PC-9 (cell line): ENCODE measurements at regions of chr2 and their contacts with region 1.

Region 1: DNA sequence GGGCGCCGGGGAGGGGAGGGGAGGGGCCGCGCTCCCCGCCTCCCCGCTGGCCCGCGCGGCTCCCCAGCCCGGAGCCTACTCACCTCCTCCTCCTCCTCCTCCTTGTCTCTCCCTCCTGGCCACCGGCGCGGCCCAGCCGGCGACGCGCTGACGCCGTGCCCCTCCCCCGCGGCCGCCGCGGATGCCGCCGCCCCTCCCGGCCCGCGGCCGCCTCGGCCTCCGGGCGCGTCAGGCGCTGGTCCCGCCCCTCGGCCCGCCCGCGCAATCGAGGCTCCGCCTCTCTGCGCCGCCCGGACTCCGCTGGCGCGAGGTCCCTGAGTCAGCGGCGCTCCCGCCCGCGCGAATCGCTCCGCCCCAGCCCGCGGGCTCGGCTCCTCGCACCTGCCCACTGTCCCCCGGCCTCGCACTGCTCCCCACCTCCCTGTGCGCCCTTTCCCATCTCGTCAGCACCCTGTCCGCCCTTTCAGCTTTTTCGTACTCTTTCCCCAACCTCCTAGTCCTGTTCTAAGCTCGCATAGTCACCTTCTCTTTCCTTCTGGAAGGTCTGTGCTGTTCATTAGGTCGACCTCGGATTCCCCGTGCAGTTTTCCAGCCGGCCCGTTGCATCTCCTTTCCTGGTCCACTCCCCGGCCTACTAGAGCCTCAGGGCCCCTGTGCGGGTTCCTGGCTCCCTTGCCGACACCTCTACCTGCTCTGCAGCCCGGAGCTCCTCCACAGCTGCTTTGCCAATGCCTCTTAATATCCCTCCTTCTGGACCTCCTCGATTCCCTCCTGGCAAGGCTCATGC is 187.4 kb downstream of the ZEB2 start:
- DNase-seq: peak; percentile 60 to 95
- H3K4me3 ChIP-seq: peak overlapping the region; percentile 92
- H3K27ac ChIP-seq: peak overlapping the region; percentile 76
- H3K4me1 ChIP-seq: peaks cover 18% of the 10 kb centered on the region
- H3K27me3 ChIP-seq: no peaks in the 10 kb centered on the region
- CTCF ChIP-seq: no peak

Region 2: GRCh38 chr2:144230448-144231085 is 102.0 kb before region 1 on chr2:
- CTCF ChIA-PET with region 1: no interaction called
- POLR2A ChIA-PET with region 1: no interaction called
- intact Hi-C with region 1: no loop called
- DNase-seq: no peak
- H3K4me3 ChIP-seq: no peak overlapping the region
- H3K27ac ChIP-seq: peak overlapping the region; percentile 45
- H3K4me1 ChIP-seq: no peaks in the 10 kb centered on the region
- H3K27me3 ChIP-seq: no peaks in the 10 kb centered on the region
- CTCF ChIP-seq: no peak

Region 3: DNA sequence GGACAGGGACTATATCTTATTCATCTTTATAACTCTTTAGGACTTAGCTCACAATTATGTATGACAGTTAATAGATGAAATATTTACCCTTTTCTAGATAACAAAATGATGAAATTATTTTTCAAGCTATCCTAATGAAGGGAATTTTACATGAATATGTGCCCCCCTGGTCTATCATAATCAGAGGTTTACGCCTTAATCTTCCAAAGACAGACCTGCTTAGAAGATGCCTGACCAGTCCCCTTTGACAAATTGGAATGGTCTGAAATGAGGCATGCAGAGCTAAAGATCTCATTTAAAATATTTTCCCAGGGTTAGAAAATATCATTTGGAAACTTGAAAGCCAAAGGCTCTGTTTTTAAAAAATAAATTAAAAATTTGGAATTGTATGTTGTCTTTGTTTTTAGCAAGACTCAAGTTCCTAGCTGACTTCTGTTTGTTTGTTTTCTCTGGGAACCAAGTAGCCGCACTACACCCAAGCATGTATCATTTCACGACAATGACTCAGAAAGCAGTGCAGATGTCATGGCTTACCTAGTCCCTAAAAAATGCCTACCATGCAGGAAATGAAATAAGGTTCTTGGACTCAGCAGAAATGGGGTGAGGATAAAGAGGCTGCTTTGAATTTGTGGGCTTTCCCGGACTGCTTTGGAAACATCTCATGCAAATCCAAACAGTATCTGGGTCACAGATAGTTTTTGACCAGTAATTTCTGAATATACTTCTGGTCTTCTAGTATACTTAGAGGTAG is 25.2 kb after region 1 on chr2:
- CTCF ChIA-PET with region 1: no interaction called
- POLR2A ChIA-PET with region 1: no interaction called
- intact Hi-C with region 1: loop called (anchors 1 kb)
- DNase-seq: peak; percentile 65 to 95
- H3K4me3 ChIP-seq: no peak overlapping the region
- H3K27ac ChIP-seq: peak overlapping the region; percentile 63
- H3K4me1 ChIP-seq: peaks cover 31% of the 10 kb centered on the region
- H3K27me3 ChIP-seq: no peaks in the 10 kb centered on the region
- CTCF ChIP-seq: no peak